Activated naive CD8-positive, alpha-beta T cell treated with anti-CD3 and anti-CD28 coated beads, Interleukin-2, amount 10 ng/mL, durations not matched to agents 7 days and 5 days (primary cell): ENCODE measurements at regions of chr2 and their contacts with region 1.

Region 1: GRCh38 chr2:10072656-10073480 is 7.3 kb downstream of the CYS1 start:
- DNase-seq: peak; percentile 67
- ATAC-seq: peak; percentile 97
- H3K4me3 Mint-ChIP-seq: no peak overlapping the region
- H3K27ac Mint-ChIP-seq: no peak overlapping the region
- H3K4me1 Mint-ChIP-seq: peaks cover 10% of the 10 kb centered on the region
- H3K27me3 Mint-ChIP-seq: peaks cover 61% of the 10 kb centered on the region

Region 2: DNA sequence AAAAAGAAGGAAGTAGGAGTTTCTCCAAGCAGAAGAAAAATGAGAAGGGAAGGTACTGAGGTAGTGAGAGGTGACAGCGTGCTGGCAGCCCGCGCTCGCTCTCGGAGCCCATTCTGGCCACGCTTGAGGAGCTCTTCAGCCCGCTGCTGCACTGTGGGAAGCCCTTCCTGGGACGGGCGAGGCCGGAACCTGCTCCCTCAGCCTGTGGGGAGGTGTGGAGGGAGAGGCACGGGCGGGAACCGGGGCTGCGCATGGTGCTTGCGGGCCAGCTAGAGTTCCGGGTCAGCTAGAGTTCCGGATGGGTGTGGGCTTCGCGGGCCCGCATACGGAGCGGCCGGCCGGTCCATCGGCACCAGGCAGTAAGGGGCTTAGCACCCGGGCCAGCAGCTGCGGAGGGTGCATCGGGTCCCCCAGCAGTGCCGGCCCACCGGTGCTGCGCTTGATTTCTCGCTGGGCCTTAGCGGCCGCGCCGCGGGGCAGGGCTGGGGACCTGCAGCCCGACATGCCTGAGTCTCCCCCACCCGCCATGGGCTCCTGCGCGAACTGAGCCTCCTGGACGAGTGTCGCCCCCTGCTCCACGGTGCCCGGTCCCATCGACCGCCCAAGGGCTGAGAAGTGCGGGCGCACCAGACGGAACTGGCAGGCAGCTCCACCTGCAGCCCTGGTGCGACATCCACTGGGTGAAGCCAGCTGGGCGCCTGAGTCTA is 18.5 kb after region 1 on chr2:
- POLR2A ChIA-PET with region 1: interaction called, 11 read pairs
- DNase-seq: peak; percentile 56
- ATAC-seq: peak; percentile 67
- H3K4me3 Mint-ChIP-seq: peak overlapping the region; percentile 84
- H3K27ac Mint-ChIP-seq: no peak overlapping the region
- H3K4me1 Mint-ChIP-seq: peaks cover 8% of the 10 kb centered on the region
- H3K27me3 Mint-ChIP-seq: peaks cover 76% of the 10 kb centered on the region